Activated naive CD8-positive, alpha-beta T cell treated with anti-CD3 and anti-CD28 coated beads, Interleukin-2, amount 10 ng/mL, durations not matched to agents 7 days and 5 days (primary cell): ENCODE measurements at regions of chr13 and their contacts with region 1.

Region 1: GRCh38 chr13:30465585-30466357 is at the start of gene HMGB1:
- DNase-seq: peak; percentile 93
- ATAC-seq: peak; percentile 92
- H3K4me3 Mint-ChIP-seq: peak within 1 kb of the TSS; percentile 94
- H3K27ac Mint-ChIP-seq: peak within 1 kb of the TSS; percentile 99
- H3K4me1 Mint-ChIP-seq: peaks cover 28% of the 10 kb centered on the region
- H3K27me3 Mint-ChIP-seq: no peaks in the 10 kb centered on the region
- total RNA-seq, gene HMGB1: 483 to 504 TPM

Region 2: GRCh38 chr13:30132623-30133553 is 332.9 kb before region 1 on chr13:
- POLR2A ChIA-PET with region 1: interaction called, 11 read pairs
- DNase-seq: peak; percentile 98
- ATAC-seq: peak; percentile 100
- H3K4me3 Mint-ChIP-seq: peak overlapping the region; percentile 42
- H3K27ac Mint-ChIP-seq: peak overlapping the region; percentile 86
- H3K4me1 Mint-ChIP-seq: peaks cover 7% of the 10 kb centered on the region
- H3K27me3 Mint-ChIP-seq: peaks cover 10% of the 10 kb centered on the region

Region 3: GRCh38 chr13:30306762-30307193 is 159.0 kb before region 1 on chr13:
- POLR2A ChIA-PET with region 1: interaction called, 28 read pairs
- DNase-seq: peak; percentile 91
- ATAC-seq: peak; percentile 92
- H3K4me3 Mint-ChIP-seq: peak overlapping the region; percentile 82
- H3K27ac Mint-ChIP-seq: peak overlapping the region; percentile 86
- H3K4me1 Mint-ChIP-seq: peaks cover 37% of the 10 kb centered on the region
- H3K27me3 Mint-ChIP-seq: no peaks in the 10 kb centered on the region

Region 4: GRCh38 chr13:30371649-30372265 is 94.0 kb before region 1 on chr13:
- POLR2A ChIA-PET with region 1: interaction called, 16 read pairs
- DNase-seq: peak; percentile 57
- ATAC-seq: peak; percentile 47
- H3K4me3 Mint-ChIP-seq: peak overlapping the region; percentile 51
- H3K27ac Mint-ChIP-seq: peak overlapping the region; percentile 94
- H3K4me1 Mint-ChIP-seq: peaks cover 74% of the 10 kb centered on the region
- H3K27me3 Mint-ChIP-seq: no peaks in the 10 kb centered on the region

Region 5: DNA sequence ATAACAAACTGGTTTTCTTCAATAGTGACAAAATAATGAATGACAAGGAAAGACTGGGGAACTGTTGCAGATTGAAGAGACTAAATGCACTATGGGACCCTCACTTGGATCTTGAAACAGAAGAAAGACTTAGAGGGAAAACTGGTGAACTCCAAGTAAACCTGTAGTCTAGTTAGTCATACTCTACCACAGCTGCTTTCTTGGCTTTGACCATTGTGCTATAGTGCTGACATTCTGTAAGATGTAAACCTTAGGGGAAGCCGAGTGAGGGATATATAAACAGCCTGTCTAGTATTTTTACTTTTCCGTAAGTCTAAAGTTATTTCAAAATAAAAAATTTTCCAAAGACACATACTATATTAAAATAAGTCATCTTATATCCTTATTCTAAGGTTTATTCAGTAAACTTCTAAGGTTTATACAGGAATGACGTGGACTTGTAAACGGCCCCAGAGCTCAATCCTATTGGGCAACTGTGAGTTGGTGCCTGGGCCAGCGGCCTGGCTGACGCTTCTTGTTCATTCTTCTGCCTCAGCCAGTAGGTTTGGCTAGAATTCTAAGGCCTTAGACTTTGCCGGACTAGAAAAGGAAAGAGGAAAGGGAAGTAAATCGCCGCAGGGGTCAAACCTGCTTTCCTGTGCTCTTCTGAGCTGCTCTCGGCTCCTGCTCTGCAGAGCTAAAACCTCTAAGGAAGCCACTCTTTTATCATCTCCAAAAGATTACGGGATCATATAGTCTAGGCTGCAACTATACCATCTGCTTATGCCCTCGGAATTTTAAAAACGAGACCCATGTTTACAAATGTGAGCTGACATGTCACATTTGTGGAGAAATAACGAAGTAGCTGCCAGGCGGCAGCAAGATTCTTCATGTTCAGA is 77.1 kb before region 1 on chr13:
- POLR2A ChIA-PET with region 1: interaction called, 26 read pairs
- DNase-seq: no peak
- ATAC-seq: no peak
- H3K4me3 Mint-ChIP-seq: peak overlapping the region; percentile 74
- H3K27ac Mint-ChIP-seq: peak overlapping the region; percentile 88
- H3K4me1 Mint-ChIP-seq: peaks cover 29% of the 10 kb centered on the region
- H3K27me3 Mint-ChIP-seq: peaks cover 2% of the 10 kb centered on the region

Region 6: GRCh38 chr13:30395192-30396084 is 70.3 kb before region 1 on chr13:
- POLR2A ChIA-PET with region 1: interaction called, 26 read pairs
- DNase-seq: peak; percentile 58
- ATAC-seq: peak; percentile 68
- H3K4me3 Mint-ChIP-seq: peak overlapping the region; percentile 88
- H3K27ac Mint-ChIP-seq: peak overlapping the region; percentile 99
- H3K4me1 Mint-ChIP-seq: peaks cover 29% of the 10 kb centered on the region
- H3K27me3 Mint-ChIP-seq: no peaks in the 10 kb centered on the region

Region 7: GRCh38 chr13:30504081-30504480 is 38.3 kb after region 1 on chr13:
- POLR2A ChIA-PET with region 1: no interaction called
- DNase-seq: no peak
- ATAC-seq: no peak
- H3K4me3 Mint-ChIP-seq: no peak overlapping the region
- H3K27ac Mint-ChIP-seq: no peak overlapping the region
- H3K4me1 Mint-ChIP-seq: peaks cover 2% of the 10 kb centered on the region
- H3K27me3 Mint-ChIP-seq: no peaks in the 10 kb centered on the region

Region 8: GRCh38 chr13:30617315-30618185 is 151.8 kb after region 1 on chr13 and contains the start of gene USPL1:
- POLR2A ChIA-PET with region 1: interaction called, 30 read pairs
- DNase-seq: peak; percentile 99
- ATAC-seq: peak; percentile 88
- H3K4me3 Mint-ChIP-seq: no peak within 1 kb of the TSS
- H3K27ac Mint-ChIP-seq: no peak within 1 kb of the TSS
- H3K4me1 Mint-ChIP-seq: peaks cover 13% of the 10 kb centered on the region
- H3K27me3 Mint-ChIP-seq: no peaks in the 10 kb centered on the region
- total RNA-seq, gene USPL1: 23.9 to 25.8 TPM